Transverse colon (tissue), 4 donors: ENCODE measurements at regions of chr5 and their contacts with region 1.

Region 1: DNA sequence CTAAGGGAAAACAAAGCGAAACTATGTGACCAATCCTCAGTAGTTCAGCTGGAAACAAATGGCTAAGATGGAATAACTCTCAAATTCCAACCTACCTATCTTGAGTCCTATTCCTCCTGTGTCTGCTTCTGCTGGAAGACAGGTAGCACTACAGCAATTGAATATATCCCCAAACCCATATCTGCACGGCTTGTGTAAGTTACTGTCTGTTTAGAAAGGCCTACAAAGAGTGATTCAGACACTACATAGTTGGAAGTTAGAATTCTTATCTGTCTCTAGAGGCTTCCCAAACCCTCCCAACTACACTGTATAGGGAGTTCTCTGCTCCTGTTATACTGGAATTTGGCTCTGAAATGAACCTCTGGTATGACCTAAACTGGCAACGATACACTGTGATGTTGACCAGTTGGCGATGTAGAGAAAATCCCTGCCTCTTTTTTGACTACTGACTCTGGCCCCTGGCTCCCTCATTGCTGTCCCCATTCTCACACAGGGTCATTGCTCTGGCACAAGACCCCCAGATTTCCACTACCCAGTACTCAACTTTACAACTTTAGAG is 22.6 kb upstream of the NADK2 start:
- DNase-seq: no peak
- H3K4me3 ChIP-seq: no peak overlapping the region
- H3K27ac ChIP-seq: no peak overlapping the region
- H3K4me1 ChIP-seq: no peaks in the 10 kb centered on the region
- H3K27me3 ChIP-seq: no peaks in the 10 kb centered on the region
- CTCF ChIP-seq: no peak
- EP300 ChIP-seq: no peak
- POLR2A ChIP-seq: no peak

Region 2: DNA sequence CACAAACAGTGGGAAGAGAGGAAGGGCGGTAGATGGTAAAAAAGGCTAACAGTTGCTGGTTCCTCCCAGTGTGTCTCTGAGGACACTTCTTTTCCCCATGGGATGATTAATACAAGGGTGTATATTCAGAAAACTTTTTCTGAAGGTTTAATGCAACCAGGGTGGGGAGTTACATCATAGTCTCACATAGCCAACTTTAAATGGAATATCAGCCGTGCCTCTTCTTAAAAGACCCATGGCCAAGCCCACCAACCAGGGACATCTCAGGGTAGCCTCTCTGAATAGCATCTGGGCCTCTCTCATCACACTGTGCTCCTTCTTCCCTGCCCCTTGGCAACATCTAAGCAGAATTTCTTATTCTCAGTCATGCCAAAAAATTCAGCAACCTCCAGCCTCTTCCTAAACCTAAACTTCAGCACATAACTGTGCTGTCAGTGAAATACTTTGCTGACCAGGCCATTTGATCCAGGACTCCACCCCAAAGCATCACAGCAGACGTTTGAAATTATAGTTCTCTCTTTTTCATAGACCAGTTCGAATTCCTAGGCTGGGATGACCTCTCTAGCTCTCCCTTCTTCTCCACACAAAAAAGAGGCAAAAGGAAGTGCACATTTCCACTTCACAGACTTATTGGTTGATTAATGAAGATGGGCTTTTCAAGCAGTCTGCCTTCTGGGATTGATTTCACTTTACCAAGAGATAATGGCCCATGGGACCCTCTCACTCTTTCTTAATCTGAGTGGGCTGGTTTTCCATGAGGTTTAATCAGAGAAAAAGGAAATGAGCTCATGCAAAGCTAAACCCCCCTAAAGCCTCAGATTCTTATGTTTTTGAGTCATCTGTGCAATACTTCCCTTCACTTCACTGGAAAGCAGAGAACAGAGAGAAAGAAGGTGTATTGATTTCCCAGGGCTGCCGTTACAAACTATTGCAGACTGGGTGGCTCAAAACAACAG is 1693.3 kb before region 1 on chr5:
- in situ Hi-C with region 1: no loop called
- intact Hi-C with region 1: no loop called
- DNase-seq: no peak
- H3K4me3 ChIP-seq: no peak overlapping the region
- H3K27ac ChIP-seq: no peak overlapping the region
- H3K4me1 ChIP-seq: peaks cover 0 to 8% (median 0%) of the 10 kb centered on the region in 4 donors
- H3K27me3 ChIP-seq: no peaks in the 10 kb centered on the region
- CTCF ChIP-seq: no peak
- EP300 ChIP-seq: no peak
- POLR2A ChIP-seq: no peak

Region 3: DNA sequence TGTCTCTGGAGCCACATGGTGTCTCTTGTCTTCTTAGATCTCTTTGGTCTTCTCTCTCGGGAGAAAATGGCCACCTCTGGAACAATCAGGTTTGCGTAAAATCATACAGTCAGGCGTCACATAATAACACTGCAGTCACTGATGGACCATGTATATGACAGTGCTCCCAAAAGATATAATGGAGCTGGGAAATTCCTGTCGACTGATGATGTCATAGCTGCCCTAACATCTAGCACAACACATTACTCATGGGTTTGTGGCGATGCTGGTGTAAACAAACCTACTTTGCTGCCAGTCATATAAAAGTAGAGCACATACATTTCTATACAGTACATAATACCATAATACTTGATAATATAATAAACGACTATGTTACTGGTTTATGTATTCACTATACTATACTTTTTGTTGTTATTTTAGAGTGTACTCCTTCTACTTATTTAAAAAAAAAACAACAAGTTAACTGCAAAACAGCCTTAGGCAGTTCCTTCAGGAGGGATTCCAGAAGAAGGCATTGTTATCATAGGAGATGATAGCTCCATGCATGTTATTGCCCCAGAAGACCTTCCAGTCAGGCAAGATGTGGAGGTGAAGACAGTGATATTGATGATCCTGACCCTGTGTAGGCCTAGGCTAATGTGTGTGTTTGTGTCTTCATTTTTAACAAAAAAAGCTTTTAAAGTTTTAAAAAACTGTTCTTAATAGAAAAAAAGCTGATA is 1638.1 kb before region 1 on chr5:
- in situ Hi-C with region 1: no loop called
- intact Hi-C with region 1: no loop called
- DNase-seq: no peak
- H3K4me3 ChIP-seq: no peak overlapping the region
- H3K27ac ChIP-seq: no peak overlapping the region
- H3K4me1 ChIP-seq: peaks cover 0 to 2% (median 0%) of the 10 kb centered on the region in 4 donors
- H3K27me3 ChIP-seq: no peaks in the 10 kb centered on the region
- CTCF ChIP-seq: no peak
- EP300 ChIP-seq: no peak
- POLR2A ChIP-seq: no peak

Region 4: DNA sequence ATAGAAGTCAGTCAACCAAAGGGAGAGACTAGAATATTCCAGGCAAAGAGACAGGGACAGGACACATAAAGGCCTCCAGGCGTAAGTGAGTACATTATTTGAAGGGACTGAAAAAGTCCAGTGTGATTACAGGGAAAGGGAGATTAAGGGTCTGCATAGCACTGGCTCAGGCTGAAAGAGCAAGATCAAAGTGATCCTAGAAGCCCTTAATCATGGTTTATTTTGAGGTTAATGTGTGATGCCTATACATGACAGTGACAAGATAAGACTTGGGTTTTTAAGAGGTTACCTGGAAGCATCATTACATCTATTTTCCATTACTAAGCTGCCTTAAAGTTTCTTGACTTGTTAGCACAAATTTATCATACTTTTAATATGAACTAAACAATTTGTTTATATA is 138.4 kb before region 1 on chr5:
- in situ Hi-C with region 1: no loop called
- intact Hi-C with region 1: no loop called
- DNase-seq: no peak
- H3K4me3 ChIP-seq: no peak overlapping the region
- H3K27ac ChIP-seq: no peak overlapping the region
- H3K4me1 ChIP-seq: no peaks in the 10 kb centered on the region
- H3K27me3 ChIP-seq: no peaks in the 10 kb centered on the region
- CTCF ChIP-seq: no peak
- EP300 ChIP-seq: no peak
- POLR2A ChIP-seq: no peak

Region 5: GRCh38 chr5:36397901-36398536 is 133.7 kb after region 1 on chr5:
- in situ Hi-C with region 1: no loop called
- intact Hi-C with region 1: loop called (anchors 10 kb)
- DNase-seq: no peak
- H3K4me3 ChIP-seq: no peak overlapping the region
- H3K27ac ChIP-seq: no peak overlapping the region
- H3K4me1 ChIP-seq: peaks cover 0 to 6% (median 2%) of the 10 kb centered on the region in 4 donors
- H3K27me3 ChIP-seq: no peaks in the 10 kb centered on the region
- CTCF ChIP-seq: peak in 2 of 5 experiments; percentile 25 to 28
- EP300 ChIP-seq: no peak
- POLR2A ChIP-seq: no peak